ENCODE measurements at regions of chr3 and their contacts with region 1.

Region 1: DNA sequence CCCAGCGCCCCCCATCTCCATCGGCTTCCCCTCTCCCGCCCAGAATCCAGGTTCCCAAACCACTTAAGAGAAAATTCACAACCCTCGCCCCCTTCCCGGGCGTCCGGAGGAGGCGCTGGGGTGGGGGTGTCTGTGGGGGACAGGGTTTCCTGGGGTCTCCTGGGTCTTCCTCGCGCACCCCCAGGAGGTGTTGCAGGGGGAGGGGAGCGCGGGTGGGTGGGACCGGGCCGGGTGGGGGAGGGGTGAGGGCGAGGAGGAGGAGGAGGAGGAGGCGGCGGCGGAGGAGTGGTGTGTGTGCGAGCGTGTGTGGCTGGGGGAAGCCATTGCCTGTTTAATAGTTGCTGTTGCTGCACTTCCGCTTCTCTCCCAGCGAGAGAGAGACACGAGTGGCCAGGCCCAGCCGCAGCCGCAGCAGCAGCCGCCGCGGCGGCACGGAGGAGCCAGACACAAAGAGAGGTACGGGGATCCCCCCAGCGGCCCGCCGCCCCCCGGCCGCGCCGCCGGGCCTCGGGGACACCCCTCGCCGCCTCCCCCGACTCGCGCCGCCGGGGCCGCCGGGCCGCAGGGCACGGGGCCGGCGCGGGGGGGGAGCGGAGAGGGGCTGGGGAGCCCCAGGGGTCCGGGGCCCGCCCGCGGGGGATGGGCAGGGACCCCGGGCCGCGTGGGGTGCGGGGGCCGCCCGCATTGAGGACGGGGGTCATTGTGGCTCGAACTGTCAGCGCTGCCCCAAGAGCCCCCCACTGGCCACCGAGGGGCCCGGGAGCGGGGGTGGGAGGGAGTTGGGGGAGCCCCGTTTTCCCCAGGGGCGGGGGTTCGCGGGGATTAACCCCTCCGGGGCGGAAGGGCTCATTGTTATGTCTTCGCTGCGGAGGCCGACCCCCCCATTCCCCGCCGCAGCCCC is at the start of gene UBE2E1:
- DNase-seq: peak; percentile 91
- ATAC-seq: peak; percentile 79
- H3K4me3 ChIP-seq: peak within 1 kb of the TSS in 4 of 5 experiments; percentile 57 to 88 (median 70)
- H3K4me3 Mint-ChIP-seq: peak within 1 kb of the TSS; percentile 96
- H3K27ac ChIP-seq: peak within 1 kb of the TSS; percentile 54 to 88
- H3K27ac Mint-ChIP-seq: peak within 1 kb of the TSS; percentile 97
- H3K4me1 ChIP-seq: peaks cover 32 to 36% of the 10 kb centered on the region in 2 donors
- H3K4me1 Mint-ChIP-seq: peaks cover 41% of the 10 kb centered on the region
- H3K27me3 ChIP-seq: no peaks in the 10 kb centered on the region
- H3K27me3 Mint-ChIP-seq: no peaks in the 10 kb centered on the region
- CTCF ChIP-seq: no peak
- total RNA-seq, gene UBE2E1: 63.7 and 68.2 TPM in 2 replicates

Region 2: GRCh38 chr3:23202921-23203707 is 602.8 kb before region 1 on chr3 and contains the start of gene UBE2E2:
- CTCF ChIA-PET with region 1: no interaction called
- POLR2A ChIA-PET with region 1: no interaction called
- intact Hi-C with region 1: loop called (anchors 5 kb)
- DNase-seq: peak; percentile 90
- ATAC-seq: peak; percentile 77
- H3K4me3 ChIP-seq: peak within 1 kb of the TSS; percentile 62 to 97 (median 90)
- H3K4me3 Mint-ChIP-seq: peak within 1 kb of the TSS; percentile 97
- H3K27ac ChIP-seq: peak within 1 kb of the TSS; percentile 66 to 78
- H3K27ac Mint-ChIP-seq: peak within 1 kb of the TSS; percentile 86
- H3K4me1 ChIP-seq: peaks cover 13% of the 10 kb centered on the region in 2 donors
- H3K4me1 Mint-ChIP-seq: peaks cover 35% of the 10 kb centered on the region
- H3K27me3 ChIP-seq: no peaks in the 10 kb centered on the region
- H3K27me3 Mint-ChIP-seq: no peaks in the 10 kb centered on the region
- CTCF ChIP-seq: no peak
- total RNA-seq, gene UBE2E2: 44.2 and 45.0 TPM in 2 replicates

Region 3: DNA sequence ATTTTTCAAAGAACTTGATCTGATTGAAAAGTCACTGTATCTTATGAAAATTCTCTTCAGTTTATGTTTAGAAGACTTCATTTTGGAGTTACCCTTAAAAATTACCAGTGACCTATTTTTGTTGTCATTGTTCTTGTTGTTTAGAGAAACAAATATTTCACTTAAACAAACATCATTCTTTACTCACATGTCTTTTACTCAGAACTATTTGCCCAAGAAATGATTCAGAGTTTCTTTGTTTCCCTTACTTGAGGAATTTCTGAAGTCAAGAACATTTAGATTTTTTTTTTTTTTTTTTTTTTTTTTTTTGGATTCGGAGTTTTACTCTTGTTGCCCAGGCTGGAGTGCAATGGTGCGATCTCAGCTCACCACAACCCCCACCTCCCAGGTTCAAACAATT is 259.7 kb before region 1 on chr3:
- CTCF ChIA-PET with region 1: no interaction called
- POLR2A ChIA-PET with region 1: no interaction called
- intact Hi-C with region 1: no loop called
- DNase-seq: no peak
- ATAC-seq: no peak
- H3K4me3 ChIP-seq: no peak overlapping the region
- H3K4me3 Mint-ChIP-seq: no peak overlapping the region
- H3K27ac ChIP-seq: no peak overlapping the region
- H3K27ac Mint-ChIP-seq: no peak overlapping the region
- H3K4me1 ChIP-seq: peaks cover 0 to 4% of the 10 kb centered on the region in 2 donors
- H3K4me1 Mint-ChIP-seq: peaks cover 14% of the 10 kb centered on the region
- H3K27me3 ChIP-seq: no peaks in the 10 kb centered on the region
- H3K27me3 Mint-ChIP-seq: no peaks in the 10 kb centered on the region
- CTCF ChIP-seq: no peak

Region 4: GRCh38 chr3:23659274-23659673 is 146.6 kb before region 1 on chr3:
- CTCF ChIA-PET with region 1: no interaction called
- POLR2A ChIA-PET with region 1: interaction called, 4 read pairs
- intact Hi-C with region 1: loop called (anchors 10 kb)
- DNase-seq: peak; percentile 56
- ATAC-seq: peak; percentile 90
- H3K4me3 ChIP-seq: peak overlapping the region in 1 of 5 experiments; percentile 37
- H3K4me3 Mint-ChIP-seq: peak overlapping the region; percentile 73
- H3K27ac ChIP-seq: peak overlapping the region; percentile 75 to 83
- H3K27ac Mint-ChIP-seq: peak overlapping the region; percentile 87
- H3K4me1 ChIP-seq: peaks cover 56 to 64% of the 10 kb centered on the region in 2 donors
- H3K4me1 Mint-ChIP-seq: peaks cover 70% of the 10 kb centered on the region
- H3K27me3 ChIP-seq: no peaks in the 10 kb centered on the region
- H3K27me3 Mint-ChIP-seq: no peaks in the 10 kb centered on the region
- CTCF ChIP-seq: no peak

Region 5: DNA sequence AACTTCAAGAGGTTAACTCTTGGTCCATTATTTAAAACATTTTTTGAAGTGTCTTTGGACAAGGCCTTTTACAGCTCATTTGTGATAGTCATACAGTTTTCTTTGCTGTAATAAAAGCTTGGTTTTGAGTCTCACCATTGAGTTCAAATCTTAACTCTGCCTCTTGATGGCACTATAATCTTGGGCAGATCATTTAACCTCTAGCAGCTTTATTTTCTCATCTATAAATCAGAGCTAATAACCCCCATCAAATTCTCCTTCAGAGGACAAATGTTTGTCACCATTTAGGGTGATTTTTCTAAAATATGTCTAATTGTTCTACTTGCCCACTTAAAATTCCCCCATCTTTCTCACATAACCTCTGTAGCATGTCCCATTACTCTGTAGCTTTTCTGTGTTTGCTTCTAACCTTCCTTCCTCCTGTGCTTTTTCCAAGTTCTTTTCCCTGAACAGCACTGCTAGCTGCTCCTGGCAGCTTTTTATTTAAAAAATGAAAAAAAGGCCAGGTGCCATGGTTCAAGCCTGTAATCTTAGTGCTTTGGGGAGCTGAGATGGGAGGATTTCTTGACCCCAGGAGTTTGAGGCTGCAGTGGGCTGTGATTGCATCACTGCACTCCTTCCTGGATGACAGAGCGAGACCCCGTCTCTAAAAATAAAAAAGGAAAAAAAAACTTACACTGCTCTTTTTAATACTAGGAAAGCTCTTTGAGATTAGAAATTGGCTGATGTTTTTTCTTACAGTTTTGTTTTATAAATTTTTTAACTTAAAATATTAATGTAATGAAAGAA is 28.4 kb after region 1 on chr3:
- CTCF ChIA-PET with region 1: interaction called, 8 read pairs
- POLR2A ChIA-PET with region 1: interaction called, 4 read pairs
- intact Hi-C with region 1: loop called (anchors 1 kb)
- DNase-seq: no peak
- ATAC-seq: no peak
- H3K4me3 ChIP-seq: no peak overlapping the region
- H3K4me3 Mint-ChIP-seq: no peak overlapping the region
- H3K27ac ChIP-seq: no peak overlapping the region
- H3K27ac Mint-ChIP-seq: no peak overlapping the region
- H3K4me1 ChIP-seq: peaks cover 55 to 64% of the 10 kb centered on the region in 2 donors
- H3K4me1 Mint-ChIP-seq: peaks cover 69% of the 10 kb centered on the region
- H3K27me3 ChIP-seq: no peaks in the 10 kb centered on the region
- H3K27me3 Mint-ChIP-seq: no peaks in the 10 kb centered on the region
- CTCF ChIP-seq: peak; percentile 28

Region 6: GRCh38 chr3:23916886-23917678 is 111.2 kb after region 1 on chr3 and contains the starts of genes NKIRAS1 and RPL15:
- CTCF ChIA-PET with region 1: interaction called, 3 read pairs
- POLR2A ChIA-PET with region 1: interaction called, 8 read pairs
- intact Hi-C with region 1: loop called (anchors 1 kb)
- DNase-seq: peak; percentile 97
- ATAC-seq: peak; percentile 92
- H3K4me3 ChIP-seq: peak within 1 kb of the TSS; percentile 83 to 99 (median 99)
- H3K4me3 Mint-ChIP-seq: peak within 1 kb of the TSS; percentile 99
- H3K27ac ChIP-seq: peak within 1 kb of the TSS; percentile 85 to 94
- H3K27ac Mint-ChIP-seq: peak within 1 kb of the TSS; percentile 99
- H3K4me1 ChIP-seq: peaks cover 33 to 35% of the 10 kb centered on the region in 2 donors
- H3K4me1 Mint-ChIP-seq: peaks cover 51% of the 10 kb centered on the region
- H3K27me3 ChIP-seq: no peaks in the 10 kb centered on the region
- H3K27me3 Mint-ChIP-seq: peaks cover 4% of the 10 kb centered on the region
- CTCF ChIP-seq: peak; percentile 36
- total RNA-seq, gene NKIRAS1: 3.5 and 4.7 TPM in 2 replicates
- total RNA-seq, gene RPL15: 2,162 and 2,177 TPM in 2 replicates

Region 7: GRCh38 chr3:24688446-24689148 is 882.7 kb after region 1 on chr3:
- CTCF ChIA-PET with region 1: no interaction called
- POLR2A ChIA-PET with region 1: no interaction called
- intact Hi-C with region 1: no loop called
- DNase-seq: no peak
- ATAC-seq: no peak
- H3K4me3 ChIP-seq: no peak overlapping the region
- H3K4me3 Mint-ChIP-seq: no peak overlapping the region
- H3K27ac ChIP-seq: no peak overlapping the region
- H3K27ac Mint-ChIP-seq: no peak overlapping the region
- H3K4me1 ChIP-seq: no peaks in the 10 kb centered on the region
- H3K4me1 Mint-ChIP-seq: no peaks in the 10 kb centered on the region
- H3K27me3 ChIP-seq: no peaks in the 10 kb centered on the region
- H3K27me3 Mint-ChIP-seq: peaks cover 4% of the 10 kb centered on the region
- CTCF ChIP-seq: no peak

Measured in B cell (primary cell).